ENCODE measurements at regions of chr15 and their contacts with region 1.

Region 1: DNA sequence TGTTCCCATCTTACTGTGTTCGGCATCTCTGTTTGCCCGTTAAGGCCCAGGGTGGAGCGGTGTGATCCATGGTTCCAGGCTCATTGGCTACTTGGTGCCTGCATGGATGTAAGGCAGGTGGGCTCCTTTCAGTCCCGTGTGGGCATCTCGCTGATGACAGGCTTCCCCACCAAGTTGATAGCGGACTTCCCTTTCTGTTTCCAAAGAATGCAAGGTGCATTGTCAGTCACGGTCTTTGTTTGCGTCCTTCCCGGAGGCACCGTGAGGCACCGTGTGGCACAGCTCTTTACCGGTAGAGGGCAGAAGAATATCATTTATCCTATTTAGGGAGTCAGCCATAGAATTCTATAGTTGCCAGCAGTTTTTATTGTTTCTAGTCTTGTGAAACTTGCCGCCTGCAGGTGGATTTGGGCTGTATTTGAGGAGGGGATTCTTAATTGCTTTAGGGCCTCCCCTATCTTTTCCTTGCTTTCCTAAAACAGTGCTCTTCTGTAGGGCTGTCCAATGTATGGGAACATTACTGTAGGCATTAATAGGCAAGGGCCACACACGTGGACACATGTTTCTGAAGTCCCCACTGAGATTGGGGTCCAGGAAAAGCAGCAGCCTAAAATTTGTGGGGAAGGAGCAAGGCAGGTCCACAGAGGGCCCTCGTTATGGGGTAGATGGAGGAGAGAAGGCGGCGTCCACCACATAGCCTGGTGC is 244.1 kb downstream of the SLCO3A1 start:
- DNase-seq: peak in 7 of 9 experiments; percentile 13 to 68 (median 41)
- ATAC-seq: peak; percentile 48
- H3K4me3 ChIP-seq: no peak overlapping the region
- H3K4me3 Mint-ChIP-seq: peak overlapping the region; percentile 12
- H3K27ac ChIP-seq: no peak overlapping the region
- H3K27ac Mint-ChIP-seq: peak overlapping the region; percentile 25
- H3K4me1 ChIP-seq: peaks cover 26% of the 10 kb centered on the region
- H3K4me1 Mint-ChIP-seq: peaks cover 51% of the 10 kb centered on the region
- H3K27me3 ChIP-seq: no peaks in the 10 kb centered on the region
- H3K27me3 Mint-ChIP-seq: no peaks in the 10 kb centered on the region
- CTCF ChIP-seq: peak; percentile 61

Region 2: GRCh38 chr15:92226014-92226612 is 128.5 kb after region 1 on chr15:
- CTCF ChIA-PET with region 1: no interaction called
- POLR2A ChIA-PET with region 1: no interaction called
- intact Hi-C with region 1: loop called in 1 of 2 experiments (anchors 5 kb)
- DNase-seq: peak in 2 of 9 experiments; percentile 14 to 26
- ATAC-seq: no peak
- H3K4me3 ChIP-seq: no peak overlapping the region
- H3K4me3 Mint-ChIP-seq: no peak overlapping the region
- H3K27ac ChIP-seq: no peak overlapping the region
- H3K27ac Mint-ChIP-seq: no peak overlapping the region
- H3K4me1 ChIP-seq: no peaks in the 10 kb centered on the region
- H3K4me1 Mint-ChIP-seq: no peaks in the 10 kb centered on the region
- H3K27me3 ChIP-seq: no peaks in the 10 kb centered on the region
- H3K27me3 Mint-ChIP-seq: no peaks in the 10 kb centered on the region
- CTCF ChIP-seq: no peak

Region 3: GRCh38 chr15:92383519-92384326 is 286.1 kb after region 1 on chr15:
- CTCF ChIA-PET with region 1: interaction called, 5 read pairs
- POLR2A ChIA-PET with region 1: no interaction called
- intact Hi-C with region 1: loop called (anchors 1 to 2 kb)
- DNase-seq: peak in 2 of 9 experiments; percentile 16 to 20
- ATAC-seq: no peak
- H3K4me3 ChIP-seq: no peak overlapping the region
- H3K4me3 Mint-ChIP-seq: no peak overlapping the region
- H3K27ac ChIP-seq: no peak overlapping the region
- H3K27ac Mint-ChIP-seq: no peak overlapping the region
- H3K4me1 ChIP-seq: no peaks in the 10 kb centered on the region
- H3K4me1 Mint-ChIP-seq: no peaks in the 10 kb centered on the region
- H3K27me3 ChIP-seq: no peaks in the 10 kb centered on the region
- H3K27me3 Mint-ChIP-seq: peaks cover 28% of the 10 kb centered on the region
- CTCF ChIP-seq: peak; percentile 21

Region 4: GRCh38 chr15:93048759-93049161 is 951.1 kb after region 1 on chr15:
- CTCF ChIA-PET with region 1: no interaction called
- POLR2A ChIA-PET with region 1: no interaction called
- intact Hi-C with region 1: loop called in 1 of 2 experiments (anchors 5 kb)
- DNase-seq: peak in 3 of 9 experiments; percentile 43 to 49 (median 45)
- ATAC-seq: no peak
- H3K4me3 ChIP-seq: no peak overlapping the region
- H3K4me3 Mint-ChIP-seq: peak overlapping the region; percentile 8
- H3K27ac ChIP-seq: no peak overlapping the region
- H3K27ac Mint-ChIP-seq: no peak overlapping the region
- H3K4me1 ChIP-seq: peaks cover 35% of the 10 kb centered on the region
- H3K4me1 Mint-ChIP-seq: peaks cover 40% of the 10 kb centered on the region
- H3K27me3 ChIP-seq: no peaks in the 10 kb centered on the region
- H3K27me3 Mint-ChIP-seq: no peaks in the 10 kb centered on the region
- CTCF ChIP-seq: no peak